ENCODE measurements at regions of chr17 and their contacts with region 1.

Region 1: DNA sequence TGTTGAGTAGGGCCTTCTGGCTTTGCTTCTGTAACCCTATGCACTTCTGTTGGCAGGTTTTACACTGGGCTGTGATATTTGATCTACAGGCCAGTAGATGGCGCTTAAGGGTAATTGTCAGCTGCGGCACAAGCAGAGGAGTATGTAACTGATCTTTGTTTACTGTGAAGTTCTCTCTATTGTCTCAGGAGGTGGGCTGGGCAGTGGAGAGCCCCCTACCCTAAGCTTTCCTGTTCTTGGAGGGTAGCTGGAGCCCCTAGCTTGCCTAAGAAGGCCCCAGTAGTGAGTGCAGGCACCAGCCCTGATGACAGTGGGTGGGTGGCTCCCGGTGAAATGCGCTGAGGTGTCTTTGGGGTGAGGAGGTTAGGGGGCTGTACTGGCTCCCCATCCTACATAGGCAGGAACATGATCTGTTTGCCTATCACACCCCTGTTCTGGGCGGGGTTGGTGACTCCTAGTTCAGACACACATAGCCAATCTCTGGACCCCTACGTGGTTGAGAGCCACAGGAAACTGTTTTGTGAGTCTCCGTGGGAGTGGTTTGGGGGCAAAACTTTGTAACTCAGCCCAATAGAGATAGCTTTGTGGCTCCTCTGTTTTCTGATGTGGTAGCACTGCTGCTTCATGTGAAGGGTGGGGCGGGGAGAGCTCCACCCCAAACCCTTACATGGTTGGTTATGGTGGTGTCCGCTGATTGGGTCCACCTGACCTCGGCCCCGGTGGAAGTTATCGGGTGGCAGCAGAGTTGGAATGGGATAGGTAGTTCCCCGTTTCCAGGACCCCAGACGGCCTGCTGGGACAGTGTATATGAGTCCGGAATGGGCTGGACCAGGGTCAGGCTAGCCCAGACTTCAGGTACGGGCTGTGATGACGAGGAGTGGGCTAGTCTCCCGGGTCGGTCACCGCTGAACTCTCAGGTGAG is 60.4 kb downstream of the SLFN11 start:
- DNase-seq: peak; percentile 48
- H3K4me3 ChIP-seq: no peak overlapping the region
- H3K27ac ChIP-seq: no peak overlapping the region
- H3K4me1 ChIP-seq: peaks cover 21% of the 10 kb centered on the region
- H3K27me3 ChIP-seq: no peaks in the 10 kb centered on the region
- CTCF ChIP-seq: peak; percentile 77 to 82

Region 2: DNA sequence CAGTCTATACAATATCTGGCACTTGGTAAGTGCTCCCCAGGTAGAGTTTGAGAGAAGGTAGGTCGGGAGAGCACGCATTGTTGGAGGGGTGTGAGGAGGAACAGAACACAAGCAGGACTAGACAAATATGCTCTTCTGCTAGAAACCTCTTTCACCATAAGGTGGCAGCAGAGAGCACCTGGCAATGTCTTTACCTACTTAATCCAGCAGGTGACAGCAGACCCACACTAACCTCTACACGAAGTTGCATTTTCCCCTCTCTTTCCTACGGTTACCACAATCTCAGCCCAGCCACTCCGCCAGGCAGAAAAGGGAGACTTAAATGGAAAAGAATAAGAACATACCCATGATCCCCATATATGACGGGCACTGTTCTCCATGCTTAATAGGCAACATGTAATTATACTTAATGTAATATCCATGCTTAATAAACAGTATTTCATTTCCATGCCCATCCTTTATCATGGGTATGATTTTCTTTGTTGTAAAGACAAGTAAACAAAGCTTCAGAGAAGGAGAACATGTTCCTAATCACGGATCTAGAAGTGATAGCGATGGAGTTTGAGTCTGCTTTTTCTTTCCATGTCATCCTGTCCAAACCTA is 1113.0 kb before region 1 on chr17:
- CTCF ChIA-PET with region 1: no interaction called
- dilution Hi-C with region 1: no loop called
- in situ Hi-C with region 1: no loop called
- intact Hi-C with region 1: loop called (anchors 5 kb)
- DNase-seq: peak; percentile 50
- H3K4me3 ChIP-seq: no peak overlapping the region
- H3K27ac ChIP-seq: no peak overlapping the region
- H3K4me1 ChIP-seq: no peaks in the 10 kb centered on the region
- H3K27me3 ChIP-seq: no peaks in the 10 kb centered on the region
- CTCF ChIP-seq: peak; percentile 100

Region 3: DNA sequence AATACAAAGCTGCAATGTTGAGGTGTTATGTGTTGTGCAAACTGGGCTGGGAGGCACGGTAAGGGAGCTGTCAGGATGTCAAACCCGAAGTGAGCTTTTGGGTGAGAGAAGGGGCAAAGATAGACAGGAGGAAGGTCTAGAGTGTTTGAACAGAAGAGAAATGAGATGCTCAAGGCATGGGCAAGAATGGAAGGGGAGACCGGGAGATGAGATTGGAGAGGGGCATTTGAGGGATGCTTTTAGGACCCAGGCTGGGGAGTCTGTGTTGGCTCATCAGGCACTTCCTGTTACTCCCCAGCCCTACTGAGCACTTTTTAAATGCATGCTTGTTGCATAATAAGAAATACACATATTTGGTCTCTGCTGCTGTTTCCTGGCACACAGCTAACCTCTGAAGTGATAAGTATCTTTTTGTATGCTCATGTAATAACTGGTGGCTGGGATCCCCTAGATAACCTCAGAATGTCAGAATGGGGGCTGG is 151.7 kb before region 1 on chr17:
- CTCF ChIA-PET with region 1: no interaction called
- dilution Hi-C with region 1: no loop called
- in situ Hi-C with region 1: loop called in 1 of 2 experiments (anchors 10 kb)
- intact Hi-C with region 1: no loop called
- DNase-seq: peak; percentile 14
- H3K4me3 ChIP-seq: no peak overlapping the region
- H3K27ac ChIP-seq: no peak overlapping the region
- H3K4me1 ChIP-seq: peaks cover 34% of the 10 kb centered on the region
- H3K27me3 ChIP-seq: no peaks in the 10 kb centered on the region
- CTCF ChIP-seq: no peak

Region 4: GRCh38 chr17:35170968-35171771 is 141.9 kb before region 1 on chr17:
- CTCF ChIA-PET with region 1: no interaction called
- dilution Hi-C with region 1: no loop called
- in situ Hi-C with region 1: loop called in 1 of 2 experiments (anchors 10 kb)
- intact Hi-C with region 1: loop called (anchors 1 kb)
- DNase-seq: peak; percentile 17
- H3K4me3 ChIP-seq: no peak overlapping the region
- H3K27ac ChIP-seq: no peak overlapping the region
- H3K4me1 ChIP-seq: peaks cover 7% of the 10 kb centered on the region
- H3K27me3 ChIP-seq: no peaks in the 10 kb centered on the region
- CTCF ChIP-seq: peak; percentile 20 to 36

Region 5: GRCh38 chr17:35486920-35487732 is 174.1 kb after region 1 on chr17:
- CTCF ChIA-PET with region 1: no interaction called
- dilution Hi-C with region 1: loop called (anchors 25 kb)
- in situ Hi-C with region 1: no loop called
- intact Hi-C with region 1: no loop called
- DNase-seq: peak; percentile 73
- H3K4me3 ChIP-seq: peak overlapping the region; percentile 42 to 62 (median 50)
- H3K27ac ChIP-seq: peak overlapping the region; percentile 24
- H3K4me1 ChIP-seq: peaks cover 12% of the 10 kb centered on the region
- H3K27me3 ChIP-seq: peaks cover 18% of the 10 kb centered on the region
- CTCF ChIP-seq: no peak

Region 6: GRCh38 chr17:35529866-35530265 is 216.8 kb after region 1 on chr17:
- CTCF ChIA-PET with region 1: interaction called, 4 read pairs
- dilution Hi-C with region 1: loop called (anchors 5 kb)
- in situ Hi-C with region 1: loop called (anchors 5 kb)
- intact Hi-C with region 1: loop called (anchors 1 kb)
- DNase-seq: no peak
- H3K4me3 ChIP-seq: no peak overlapping the region
- H3K27ac ChIP-seq: no peak overlapping the region
- H3K4me1 ChIP-seq: no peaks in the 10 kb centered on the region
- H3K27me3 ChIP-seq: no peaks in the 10 kb centered on the region
- CTCF ChIP-seq: no peak

Region 7: GRCh38 chr17:35537601-35538141 is 224.6 kb after region 1 on chr17 and contains the start of gene SLFN12L:
- CTCF ChIA-PET with region 1: no interaction called
- dilution Hi-C with region 1: loop called (anchors 5 kb)
- in situ Hi-C with region 1: loop called (anchors 5 kb)
- intact Hi-C with region 1: loop called (anchors 1 kb)
- DNase-seq: no peak
- H3K4me3 ChIP-seq: no peak within 1 kb of the TSS
- H3K27ac ChIP-seq: no peak within 1 kb of the TSS
- H3K4me1 ChIP-seq: no peaks in the 10 kb centered on the region
- H3K27me3 ChIP-seq: peaks cover 2% of the 10 kb centered on the region
- CTCF ChIP-seq: no peak
- total RNA-seq, gene SLFN12L: 0.12 to 0.17 TPM

Measured in mammary epithelial cell (primary cell).